Dorsolateral prefrontal cortex (tissue), 120 donors: ENCODE measurements at regions of chr1 and their contacts with region 1.

Region 1: GRCh38 chr1:58573705-58574591 is 3.1 kb downstream of the TACSTD2 start:
- DNase-seq: no peak
- H3K4me3 ChIP-seq: no peak overlapping the region
- H3K27ac ChIP-seq: no peak overlapping the region
- H3K27me3 ChIP-seq: peaks cover 0 to 60% (median 32%) of the 10 kb centered on the region in 45 donors
- CTCF ChIP-seq: no peak

Region 2: DNA sequence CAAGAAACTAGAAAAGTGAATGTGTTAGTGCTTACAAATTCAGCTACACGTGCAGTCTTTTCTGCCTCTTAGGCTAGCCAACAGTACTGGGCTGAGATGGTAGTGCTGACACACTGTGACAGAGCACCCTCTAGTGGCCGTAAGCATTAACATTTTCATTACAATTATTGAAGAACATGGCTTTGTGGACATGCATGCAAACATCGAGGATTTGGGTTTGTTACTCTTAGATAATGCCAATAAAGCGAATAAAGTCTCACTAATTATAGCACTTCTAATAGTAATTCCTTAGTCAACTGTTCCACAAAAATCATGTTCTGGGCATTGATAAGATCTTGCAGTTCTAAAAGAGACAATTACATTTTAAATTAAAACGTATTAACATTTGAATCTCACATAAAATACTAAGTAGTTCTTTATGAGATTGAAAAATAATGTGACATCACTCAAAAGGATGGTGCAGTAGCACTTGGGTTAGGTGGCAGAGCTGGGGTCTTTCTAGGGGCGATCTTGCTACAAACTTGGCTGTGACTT is 78.8 kb after region 1 on chr1:
- intact Hi-C with region 1: loop called in 1 of 2 experiments (anchors 5 kb)
- DNase-seq: peak in 9 of 10 donors; percentile 41 to 82 (median 53)
- H3K4me3 ChIP-seq: no peak overlapping the region
- H3K27ac ChIP-seq: peak overlapping the region in 8 of 59 donors; percentile 9 to 37 (median 22)
- H3K27me3 ChIP-seq: no peaks in the 10 kb centered on the region
- CTCF ChIP-seq: peak; percentile 76 to 98 (median 92)

Region 3: GRCh38 chr1:59057211-59057694 is 483.3 kb after region 1 on chr1:
- intact Hi-C with region 1: no loop called
- DNase-seq: no peak
- H3K4me3 ChIP-seq: no peak overlapping the region
- H3K27ac ChIP-seq: no peak overlapping the region
- H3K27me3 ChIP-seq: no peaks in the 10 kb centered on the region
- CTCF ChIP-seq: no peak